K562 (cell line): ENCODE measurements at regions of chr20 and their contacts with region 1.

Region 1: DNA sequence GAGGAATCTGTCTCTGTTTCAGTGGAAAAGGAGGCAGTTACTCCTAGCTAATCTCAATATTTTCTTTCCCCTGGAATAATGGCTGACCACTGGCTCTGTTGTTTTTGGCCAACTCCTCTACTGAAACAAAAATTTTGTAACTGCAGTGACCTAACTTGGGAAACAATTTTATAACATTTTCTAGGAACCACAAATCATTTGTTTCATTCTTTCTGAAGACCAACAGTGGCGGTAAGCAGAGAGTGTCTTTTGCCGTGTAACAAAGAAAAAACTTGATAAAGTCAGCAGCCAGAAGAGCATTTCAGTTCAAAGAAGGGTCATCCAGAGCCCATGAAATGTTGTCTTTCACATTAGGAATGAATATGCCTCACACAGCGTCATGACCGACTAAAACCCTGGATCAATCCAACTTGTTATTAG is 11.8 kb upstream of the BFSP1 start:
- DNase-seq: no peak
- ATAC-seq: no peak
- H3K4me3 ChIP-seq: no peak overlapping the region
- H3K27ac ChIP-seq: no peak overlapping the region
- H3K4me1 ChIP-seq: no peaks in the 10 kb centered on the region
- H3K27me3 ChIP-seq: peaks cover 0 to 4% of the 10 kb centered on the region in 2 experiments; a peak in 2 of 5 replicates
- CTCF ChIP-seq: no peak
- EP300 ChIP-seq: no peak
- POLR2A ChIP-seq: no peak
- RAD21 ChIP-seq: no peak

Region 2: DNA sequence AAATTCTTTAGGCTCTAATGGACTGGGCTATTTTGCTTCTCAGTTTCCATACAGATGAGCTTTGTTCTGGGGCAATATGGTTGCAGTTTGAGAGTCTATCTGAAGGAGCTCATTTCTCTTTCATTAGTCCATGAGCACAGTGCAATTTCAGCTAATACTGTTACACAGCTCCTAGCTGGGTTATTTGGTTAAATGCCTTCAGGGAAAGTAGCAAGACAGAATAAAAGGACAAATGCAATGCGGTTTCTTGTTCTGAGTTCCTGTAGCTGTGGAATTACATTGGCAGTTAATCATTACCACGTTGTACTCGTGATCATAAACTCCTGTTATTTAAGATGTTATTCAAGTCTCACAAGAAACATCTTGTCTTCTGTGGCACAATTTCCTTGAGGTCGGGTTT is 139.5 kb before region 1 on chr20:
- CTCF ChIA-PET with region 1: no interaction called
- POLR2A ChIA-PET with region 1: no interaction called
- in situ Hi-C with region 1: no loop called
- intact Hi-C with region 1: no loop called
- DNase-seq: no peak
- ATAC-seq: no peak
- H3K4me3 ChIP-seq: no peak overlapping the region
- H3K27ac ChIP-seq: no peak overlapping the region
- H3K4me1 ChIP-seq: no peaks in the 10 kb centered on the region
- H3K27me3 ChIP-seq: no peaks in the 10 kb centered on the region; a peak in 1 of 5 replicates
- CTCF ChIP-seq: no peak
- EP300 ChIP-seq: no peak
- POLR2A ChIP-seq: no peak
- RAD21 ChIP-seq: no peak

Region 3: GRCh38 chr20:17611540-17612286 is 68.7 kb after region 1 on chr20:
- CTCF ChIA-PET with region 1: interaction called, 23 read pairs
- POLR2A ChIA-PET with region 1: no interaction called
- in situ Hi-C with region 1: loop called (anchors 5 kb)
- intact Hi-C with region 1: no loop called
- DNase-seq: peak in 1 of 4 experiments; percentile 22
- ATAC-seq: no peak; the same call in 2 of the 3 replicates
- H3K4me3 ChIP-seq: no peak overlapping the region
- H3K27ac ChIP-seq: no peak overlapping the region
- H3K4me1 ChIP-seq: peaks cover 0 to 24% of the 10 kb centered on the region in 2 experiments; a peak in 2 of 5 replicates
- H3K27me3 ChIP-seq: no peaks in the 10 kb centered on the region
- CTCF ChIP-seq: peak; percentile 26 to 62 (median 38); a peak in 3 of 6 replicates
- EP300 ChIP-seq: no peak
- POLR2A ChIP-seq: no peak
- RAD21 ChIP-seq: peak in 1 of 2 experiments; percentile 39; a peak in 2 of 4 replicates

Region 4: DNA sequence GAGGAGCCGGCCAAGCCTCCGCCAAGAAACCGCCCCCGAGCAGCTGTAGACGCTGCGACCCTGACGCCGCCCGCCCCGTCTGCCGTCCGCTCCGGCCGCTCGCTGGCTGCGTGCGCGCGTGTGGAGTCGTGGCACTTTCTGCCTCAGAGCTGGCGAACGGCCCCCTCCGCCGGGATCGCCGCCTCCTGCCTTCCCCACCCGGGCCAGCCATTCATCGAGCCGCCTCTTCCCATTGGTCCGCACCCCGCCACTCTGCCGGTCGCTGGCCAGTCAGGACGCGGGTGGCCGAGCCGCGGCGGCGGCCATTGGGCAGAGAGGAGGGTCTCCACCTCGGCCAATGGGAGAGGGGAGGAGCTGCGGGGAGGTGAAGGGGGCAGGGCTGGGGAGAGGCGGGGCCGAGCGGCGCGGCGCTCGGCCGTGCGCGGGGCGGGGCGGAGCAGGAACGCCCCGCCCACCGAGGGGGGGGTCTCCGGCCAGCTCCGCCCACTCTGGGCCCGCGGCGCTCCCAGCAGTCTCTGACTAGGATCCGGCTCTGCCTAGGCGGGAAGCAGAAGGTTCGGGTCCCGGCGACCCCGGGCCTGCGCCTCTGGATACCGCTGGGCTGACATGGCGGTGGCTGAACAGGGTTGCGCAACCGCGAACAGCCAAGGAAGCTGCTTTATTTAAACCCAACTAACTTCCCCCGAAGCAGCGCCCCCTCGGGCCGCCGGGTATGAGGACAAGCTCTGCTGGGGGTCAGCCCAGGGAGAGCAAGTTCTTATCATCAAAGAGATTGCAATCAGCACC is 139.3 kb after region 1 on chr20 and contains the start of gene RRBP1:
- CTCF ChIA-PET with region 1: no interaction called
- POLR2A ChIA-PET with region 1: no interaction called
- in situ Hi-C with region 1: no loop called
- intact Hi-C with region 1: no loop called
- DNase-seq: peak; percentile 93 to 95 (median 94)
- ATAC-seq: peak; percentile 99
- H3K4me3 ChIP-seq: peak within 1 kb of the TSS; percentile 65
- H3K27ac ChIP-seq: peak within 1 kb of the TSS; percentile 78
- H3K4me1 ChIP-seq: peaks cover 14 to 29% of the 10 kb centered on the region in 2 experiments
- H3K27me3 ChIP-seq: peaks cover 8 to 20% of the 10 kb centered on the region in 2 experiments
- CTCF ChIP-seq: peak; percentile 66 to 81 (median 67)
- EP300 ChIP-seq: no peak
- POLR2A ChIP-seq: peak; percentile 72
- RAD21 ChIP-seq: peak in 1 of 2 experiments; percentile 18; a peak in 2 of 4 replicates
- polyA plus RNA-seq, gene RRBP1: 0.84 to 0.95 TPM

Region 5: DNA sequence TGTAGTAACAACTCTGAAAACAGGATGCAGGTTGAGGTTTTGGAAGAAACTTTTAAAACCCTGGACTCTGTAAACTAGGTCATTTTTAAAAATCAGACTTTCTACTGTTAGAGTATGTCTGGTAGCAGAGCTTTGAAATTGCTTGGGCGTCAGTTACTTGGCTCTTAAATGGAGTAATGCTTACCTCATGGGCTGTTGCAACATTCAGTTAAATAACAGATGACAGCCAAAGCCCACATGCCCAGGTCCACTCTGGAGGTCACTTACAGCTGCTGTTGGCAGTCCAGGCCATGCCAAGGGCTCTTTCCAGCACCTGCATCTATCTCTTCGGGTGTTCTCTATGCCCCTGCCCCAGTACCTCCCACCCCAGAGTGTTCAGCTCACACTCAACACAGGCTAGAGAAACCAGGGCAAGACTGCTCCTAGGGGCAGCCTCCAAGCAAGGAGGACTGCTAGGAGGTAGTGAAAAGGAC is 253.1 kb after region 1 on chr20:
- CTCF ChIA-PET with region 1: no interaction called
- POLR2A ChIA-PET with region 1: no interaction called
- in situ Hi-C with region 1: no loop called
- intact Hi-C with region 1: no loop called
- DNase-seq: no peak
- ATAC-seq: no peak
- H3K4me3 ChIP-seq: no peak overlapping the region
- H3K27ac ChIP-seq: no peak overlapping the region
- H3K4me1 ChIP-seq: no peaks in the 10 kb centered on the region
- H3K27me3 ChIP-seq: peaks cover 0 to 18% of the 10 kb centered on the region in 2 experiments; a peak in 4 of 5 replicates
- CTCF ChIP-seq: no peak
- EP300 ChIP-seq: no peak
- POLR2A ChIP-seq: no peak
- RAD21 ChIP-seq: no peak